H1 (cell line): ENCODE measurements at regions of chr2 and their contacts with region 1.

Region 1: GRCh38 chr2:20411361-20411894 is 35.4 kb upstream of the RHOB start:
- DNase-seq: peak; percentile 56 to 90
- H3K4me3 ChIP-seq: no peak overlapping the region
- H3K27ac ChIP-seq: no peak overlapping the region
- H3K4me1 ChIP-seq: peaks cover 0 to 2% (median 0%) of the 10 kb centered on the region in 4 experiments; a peak in 1 of 7 replicates
- H3K27me3 ChIP-seq: no peaks in the 10 kb centered on the region
- CTCF ChIP-seq: peak; percentile 84 to 98 (median 89)
- EP300 ChIP-seq: no peak
- POLR2A ChIP-seq: no peak
- RAD21 ChIP-seq: peak; percentile 73 to 81

Region 2: DNA sequence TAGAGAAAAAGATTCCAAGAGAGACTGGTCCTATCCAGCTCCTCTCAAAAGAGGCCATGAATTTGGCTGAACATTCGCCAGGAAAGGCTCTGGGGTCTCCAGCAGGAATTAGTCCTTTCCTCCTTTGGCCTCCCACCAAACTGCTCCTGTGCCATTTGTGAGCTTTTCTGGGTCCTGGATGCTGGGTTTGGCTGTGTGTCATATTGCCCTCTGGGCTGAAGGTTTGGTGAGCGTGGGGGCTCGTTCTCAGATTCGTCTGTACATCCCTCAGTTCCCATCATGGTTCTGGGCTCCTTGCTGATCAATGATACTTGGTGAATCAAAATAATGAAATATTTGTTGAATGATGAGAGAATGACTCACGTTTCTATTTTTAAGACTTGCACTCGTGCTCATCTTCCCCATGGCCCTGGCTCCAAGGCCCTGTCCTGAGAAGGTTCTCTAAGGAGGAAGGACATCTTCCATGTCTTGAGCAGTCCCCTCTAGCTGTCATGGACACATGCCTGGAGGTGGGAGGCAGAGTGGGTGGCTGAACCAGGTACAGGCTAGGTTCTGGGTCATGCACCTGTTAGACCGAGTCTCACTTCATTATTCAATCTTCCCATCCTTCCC is 12.4 kb before region 1 on chr2:
- CTCF ChIA-PET with region 1: interaction called, 17 read pairs
- POLR2A ChIA-PET with region 1: no interaction called
- DNase-seq: no peak
- H3K4me3 ChIP-seq: no peak overlapping the region
- H3K27ac ChIP-seq: no peak overlapping the region
- H3K4me1 ChIP-seq: no peaks in the 10 kb centered on the region
- H3K27me3 ChIP-seq: no peaks in the 10 kb centered on the region
- CTCF ChIP-seq: no peak
- EP300 ChIP-seq: no peak
- POLR2A ChIP-seq: no peak
- RAD21 ChIP-seq: no peak

Region 3: GRCh38 chr2:20424300-20425290 is 13.2 kb after region 1 on chr2:
- CTCF ChIA-PET with region 1: interaction called, 404 read pairs
- POLR2A ChIA-PET with region 1: interaction called, 3 read pairs
- DNase-seq: no peak
- H3K4me3 ChIP-seq: no peak overlapping the region
- H3K27ac ChIP-seq: no peak overlapping the region; the same call in 1 of the 2 replicates
- H3K4me1 ChIP-seq: no peaks in the 10 kb centered on the region; a peak in 1 of 7 replicates
- H3K27me3 ChIP-seq: no peaks in the 10 kb centered on the region
- CTCF ChIP-seq: no peak
- EP300 ChIP-seq: no peak
- POLR2A ChIP-seq: no peak
- RAD21 ChIP-seq: no peak

Region 4: GRCh38 chr2:20611077-20611843 is 199.8 kb after region 1 on chr2:
- CTCF ChIA-PET with region 1: interaction called, 13 read pairs
- POLR2A ChIA-PET with region 1: no interaction called
- DNase-seq: no peak
- H3K4me3 ChIP-seq: no peak overlapping the region
- H3K27ac ChIP-seq: no peak overlapping the region
- H3K4me1 ChIP-seq: peaks cover 0 to 14% (median 10%) of the 10 kb centered on the region in 4 experiments; a peak in 6 of 7 replicates
- H3K27me3 ChIP-seq: no peaks in the 10 kb centered on the region; a peak in 1 of 7 replicates
- CTCF ChIP-seq: no peak
- EP300 ChIP-seq: no peak
- POLR2A ChIP-seq: no peak
- RAD21 ChIP-seq: no peak

Region 5: GRCh38 chr2:20617892-20618467 is 206.6 kb after region 1 on chr2:
- CTCF ChIA-PET with region 1: interaction called, 13 read pairs
- POLR2A ChIA-PET with region 1: no interaction called
- DNase-seq: no peak
- H3K4me3 ChIP-seq: no peak overlapping the region
- H3K27ac ChIP-seq: no peak overlapping the region
- H3K4me1 ChIP-seq: peaks cover 0 to 20% (median 14%) of the 10 kb centered on the region in 4 experiments; a peak in 6 of 7 replicates
- H3K27me3 ChIP-seq: no peaks in the 10 kb centered on the region; a peak in 1 of 7 replicates
- CTCF ChIP-seq: peak in 2 of 3 experiments; percentile 7 to 24; a peak in 2 of 4 replicates
- EP300 ChIP-seq: no peak
- POLR2A ChIP-seq: no peak
- RAD21 ChIP-seq: peak in 1 of 2 experiments; percentile 16; a peak in 1 of 4 replicates

Region 6: DNA sequence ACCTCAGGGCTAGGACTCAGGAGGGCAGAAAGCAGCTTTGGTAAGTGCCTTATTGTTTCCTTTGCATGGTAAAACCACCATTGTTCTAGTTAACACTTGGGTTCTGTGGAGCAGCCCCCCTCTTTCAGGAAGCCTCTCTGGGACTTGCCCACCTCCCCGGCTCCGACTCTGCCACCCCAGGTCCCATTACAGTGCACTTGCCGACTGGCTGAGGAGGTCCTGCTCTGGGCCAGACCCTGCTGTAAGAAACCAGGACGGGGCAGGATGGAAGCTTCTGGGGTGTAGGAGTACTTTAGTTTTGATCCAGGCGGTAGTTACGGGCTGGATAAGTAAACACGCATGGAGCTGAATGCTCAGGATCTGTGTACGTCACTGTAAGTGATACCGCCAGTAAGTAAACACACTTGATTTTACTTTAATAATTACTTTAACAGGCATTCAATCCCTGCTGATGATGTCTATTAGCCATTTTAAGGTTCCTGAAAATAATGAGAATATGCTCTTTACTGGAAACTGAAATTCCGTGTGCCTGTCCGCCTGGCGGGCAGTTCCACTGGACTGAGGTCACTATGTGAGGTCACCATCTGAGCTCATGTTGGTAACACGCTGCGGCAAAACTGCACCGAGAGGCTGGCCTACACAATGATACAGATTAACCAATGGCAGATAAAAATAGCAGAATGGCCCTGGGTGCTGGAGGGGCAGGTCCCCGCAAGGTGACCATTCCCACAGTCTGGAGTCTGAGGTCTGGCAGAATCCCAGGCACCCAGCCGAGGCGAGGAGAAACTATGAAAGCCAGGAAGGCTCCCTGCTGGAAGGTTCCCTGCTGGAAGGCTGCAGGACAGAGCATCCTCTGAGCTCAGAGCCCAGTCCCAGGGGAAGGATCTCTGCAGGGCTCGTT is 214.3 kb after region 1 on chr2:
- CTCF ChIA-PET with region 1: interaction called, 46 read pairs
- POLR2A ChIA-PET with region 1: no interaction called
- DNase-seq: no peak
- H3K4me3 ChIP-seq: no peak overlapping the region
- H3K27ac ChIP-seq: no peak overlapping the region
- H3K4me1 ChIP-seq: no peaks in the 10 kb centered on the region
- H3K27me3 ChIP-seq: no peaks in the 10 kb centered on the region
- CTCF ChIP-seq: no peak
- EP300 ChIP-seq: no peak
- POLR2A ChIP-seq: no peak
- RAD21 ChIP-seq: no peak

Region 7: GRCh38 chr2:20650880-20651730 is 239.7 kb after region 1 on chr2 and contains the start of gene HS1BP3:
- CTCF ChIA-PET with region 1: interaction called, 261 read pairs
- POLR2A ChIA-PET with region 1: no interaction called
- DNase-seq: peak in 1 of 2 experiments; percentile 91
- H3K4me3 ChIP-seq: peak within 1 kb of the TSS; percentile 47 to 68 (median 56)
- H3K27ac ChIP-seq: no peak within 1 kb of the TSS
- H3K4me1 ChIP-seq: peaks cover 0 to 11% (median 7%) of the 10 kb centered on the region in 4 experiments; a peak in 5 of 7 replicates
- H3K27me3 ChIP-seq: peaks cover 0 to 4% (median under 1%) of the 10 kb centered on the region in 4 experiments; a peak in 4 of 7 replicates
- CTCF ChIP-seq: peak in 2 of 3 experiments; percentile 87 to 92; a peak in 3 of 4 replicates
- EP300 ChIP-seq: peak in 1 of 2 experiments; percentile 60; a peak in 1 of 3 replicates
- POLR2A ChIP-seq: peak in 1 of 2 experiments; percentile 74; a peak in 2 of 3 replicates
- RAD21 ChIP-seq: peak; percentile 49 to 76
- total RNA-seq, gene HS1BP3: 11.1 and 11.2 TPM in 2 replicates